ENCODE measurements at regions of chr1 and their contacts with region 1.

Region 1: DNA sequence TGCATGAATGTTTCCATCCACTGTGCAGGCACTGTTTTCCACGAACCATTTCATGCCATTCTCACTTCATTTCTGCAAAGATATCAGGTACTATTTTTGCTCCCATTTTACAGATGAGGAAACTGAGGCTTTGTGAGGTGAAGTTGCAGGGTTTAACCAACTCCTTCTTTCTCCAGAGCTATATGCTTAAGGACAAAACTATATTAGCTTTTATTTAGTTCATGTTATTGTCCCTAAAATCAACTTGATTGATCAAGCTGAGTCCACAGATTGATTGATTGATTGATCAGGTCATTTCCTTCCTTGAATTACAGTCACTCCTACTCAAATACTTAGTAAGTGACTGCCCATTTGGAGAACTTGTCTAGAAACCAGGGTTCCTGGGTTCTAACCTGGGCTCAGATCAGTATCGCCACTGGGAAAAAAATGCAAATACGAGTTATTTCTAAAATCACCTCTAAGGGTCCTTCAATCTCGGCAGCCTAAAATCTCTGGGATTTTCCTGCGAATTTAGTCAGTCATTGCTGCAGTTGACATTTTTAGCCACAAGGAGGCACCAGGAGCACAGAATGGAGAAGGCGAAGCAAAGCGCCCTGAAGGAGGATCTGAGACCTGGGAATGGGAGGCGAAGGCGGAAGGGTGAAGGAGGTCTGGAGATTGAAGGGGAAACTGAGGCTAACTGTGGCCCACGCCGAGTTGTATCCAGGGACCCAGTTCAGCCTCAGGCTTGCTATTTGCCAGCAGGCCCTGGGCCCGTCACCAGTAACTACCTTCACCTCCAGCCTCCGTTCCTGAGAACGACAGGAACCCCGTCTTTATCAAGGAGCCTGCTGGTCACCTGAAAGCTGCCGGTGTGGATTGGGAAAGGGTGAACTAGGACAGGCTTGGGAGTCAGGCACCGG is 14.3 kb upstream of the MUL1 start:
- DNase-seq: peak; percentile 60
- ATAC-seq: peak; percentile 84

Region 2: DNA sequence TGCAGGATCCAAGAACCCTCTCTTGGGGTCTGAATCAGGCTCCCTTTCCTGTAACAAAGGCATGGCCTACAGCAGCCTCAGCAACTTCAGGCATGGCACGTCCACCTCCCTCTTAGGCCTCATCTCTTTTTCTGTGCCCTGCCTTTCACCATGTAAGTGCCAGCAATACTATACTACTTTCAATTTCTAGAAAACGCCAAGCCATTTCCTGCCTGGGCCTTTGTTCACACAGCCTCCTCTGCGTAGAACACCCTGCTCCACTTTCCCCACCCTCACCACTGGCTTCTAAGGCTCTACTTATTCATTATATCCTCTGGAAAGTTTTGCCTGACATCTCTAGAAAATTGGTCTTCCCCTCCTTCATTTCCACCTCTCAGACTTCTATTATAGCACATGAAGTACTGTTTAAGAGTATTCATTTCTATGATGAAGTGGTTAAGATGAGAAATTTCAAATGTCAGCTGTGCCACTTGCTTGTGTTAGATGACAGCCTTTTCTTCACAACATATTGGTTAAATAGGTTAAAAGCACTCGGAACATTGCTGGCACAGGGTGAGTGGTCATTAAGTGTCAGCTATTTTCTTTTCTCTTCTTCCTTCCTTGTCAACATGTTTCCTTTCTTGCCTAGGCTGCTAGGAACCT is 273.1 kb before region 1 on chr1:
- intact Hi-C with region 1: no loop called
- DNase-seq: no peak
- ATAC-seq: no peak

Region 3: DNA sequence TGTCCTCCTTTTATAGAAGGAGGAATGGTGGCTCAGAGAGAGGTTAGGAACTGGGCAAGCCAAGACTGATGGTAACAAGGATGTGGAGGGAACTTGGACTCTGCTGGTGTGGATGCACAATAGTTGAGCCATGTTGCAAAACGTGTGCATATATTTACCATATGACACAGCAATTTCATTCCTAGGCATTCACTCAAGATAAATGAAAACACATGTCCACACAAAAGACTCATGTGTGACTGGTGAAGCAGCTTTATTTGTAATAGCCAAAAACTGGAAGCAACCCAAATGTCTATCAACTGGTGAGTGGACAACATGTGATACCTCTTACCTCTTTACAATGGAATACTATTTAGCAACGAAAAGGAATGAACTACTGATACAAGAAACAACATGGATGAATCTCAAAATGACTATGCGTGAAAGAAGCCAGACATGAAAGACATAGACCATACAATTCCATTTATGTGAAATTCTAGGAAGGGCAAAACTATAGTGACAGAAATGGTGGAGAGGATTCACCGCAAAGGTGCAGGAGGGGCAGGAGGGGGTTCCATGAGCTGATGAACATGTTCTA is 72.4 kb before region 1 on chr1:
- intact Hi-C with region 1: no loop called
- DNase-seq: no peak
- ATAC-seq: no peak

Region 4: GRCh38 chr1:20601129-20601825 is 79.1 kb after region 1 on chr1:
- intact Hi-C with region 1: no loop called
- DNase-seq: no peak
- ATAC-seq: no peak

Region 5: DNA sequence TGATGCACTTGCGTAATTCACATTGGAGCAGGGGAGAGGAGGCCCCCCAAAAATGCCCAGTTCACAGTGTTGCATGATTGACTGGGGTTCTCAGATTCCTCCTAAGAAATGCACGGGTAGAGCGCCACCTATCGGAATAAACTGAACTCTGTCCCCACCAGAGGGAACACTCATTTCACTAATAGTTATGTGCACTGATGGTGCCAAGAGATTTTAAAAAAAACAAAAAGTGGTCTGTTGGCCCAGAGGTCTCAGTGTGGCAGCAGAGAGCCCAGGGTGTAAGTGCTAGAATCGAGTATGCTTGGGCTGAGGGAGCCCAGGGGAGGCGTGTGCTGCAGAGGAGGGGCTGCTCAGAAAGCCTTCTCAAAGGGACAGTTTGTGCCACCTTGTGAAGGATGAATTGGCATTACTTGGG is 118.0 kb after region 1 on chr1:
- intact Hi-C with region 1: loop called (anchors 5 kb)
- DNase-seq: no peak
- ATAC-seq: peak; percentile 69

Region 6: DNA sequence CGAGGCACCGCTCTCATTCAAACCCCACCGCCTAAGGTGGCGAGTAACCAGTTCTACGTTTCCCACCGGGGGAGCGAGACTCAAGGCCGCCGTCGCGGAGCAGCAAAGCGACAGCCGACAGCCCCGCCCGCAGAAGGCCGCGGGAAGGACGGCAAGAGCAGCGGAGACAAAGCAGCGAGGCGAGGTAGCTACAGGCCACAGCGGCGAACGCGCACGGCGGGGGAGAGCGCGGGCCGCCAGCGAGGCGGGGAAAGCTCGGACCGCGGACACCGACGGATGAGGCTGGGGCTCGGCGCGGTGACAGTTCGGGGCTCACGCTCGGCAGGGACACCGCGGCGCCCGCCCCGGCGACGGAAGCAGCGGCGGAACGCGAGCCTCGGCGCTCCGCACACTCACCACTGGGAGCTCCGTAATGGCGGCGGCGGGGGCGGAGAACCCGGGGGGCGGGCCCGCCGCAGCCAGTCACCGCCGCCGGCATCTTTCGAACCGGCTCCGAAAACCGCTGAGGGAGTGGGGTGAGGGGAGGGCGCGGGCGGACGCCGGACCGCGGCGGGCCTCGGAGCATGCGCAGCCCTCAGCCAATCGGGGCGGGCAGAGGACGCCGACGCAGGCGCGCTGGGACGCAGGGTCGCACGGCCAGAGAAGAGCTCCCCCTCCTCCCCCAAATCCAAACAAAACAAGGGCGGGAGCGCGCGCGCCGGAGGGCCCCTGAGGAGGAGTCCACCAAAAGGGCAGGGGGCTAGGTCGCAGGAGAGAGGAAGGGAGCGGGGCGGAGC is 264.2 kb after region 1 on chr1:
- intact Hi-C with region 1: no loop called
- DNase-seq: peak; percentile 96
- ATAC-seq: peak; percentile 97

Measured in Right ventricle myocardium superior (tissue), 1 donor.